HEK293 (cell line): ENCODE measurements at regions of chr12 and their contacts with region 1.

Region 1: DNA sequence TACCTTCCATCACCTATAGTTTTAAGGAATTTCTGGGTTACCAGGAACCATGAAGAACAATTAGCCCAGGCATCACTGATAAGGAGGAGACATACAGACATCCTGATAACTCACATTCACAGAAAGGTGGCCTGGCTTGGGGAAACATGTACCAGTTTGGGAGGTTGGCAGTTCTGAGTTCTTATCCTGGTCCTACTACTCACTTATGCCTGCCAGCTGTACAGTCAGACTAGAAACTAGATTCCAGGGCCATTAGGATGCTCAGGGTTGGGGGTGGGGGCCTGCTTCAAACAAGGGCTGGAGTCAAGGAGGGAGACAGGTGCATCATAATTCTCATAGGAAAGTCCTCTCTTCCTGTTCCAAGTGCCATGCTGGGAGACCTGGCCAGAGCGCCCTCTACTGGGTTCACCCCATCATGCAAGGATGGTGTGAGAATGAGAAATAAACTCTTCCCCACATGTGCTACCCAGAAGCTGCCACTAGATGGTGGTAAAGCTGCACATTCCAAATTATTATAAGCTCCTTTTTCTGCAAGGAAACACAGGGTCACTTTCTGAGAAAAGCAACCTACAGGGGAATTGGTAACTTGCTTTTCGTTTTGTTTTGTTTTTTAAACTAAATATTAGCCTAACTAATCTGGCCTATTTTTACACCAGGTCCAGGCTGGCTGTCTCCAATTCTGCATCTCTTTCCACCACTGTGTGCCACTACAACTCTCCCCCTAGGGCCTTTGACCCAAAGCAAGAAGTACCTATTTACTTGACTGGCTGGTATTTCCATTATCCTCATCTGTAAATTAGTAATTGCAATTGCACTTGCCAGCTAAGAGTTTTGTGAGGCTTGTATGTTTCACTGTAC is 14.5 kb downstream of the OAS2 start:
- H3K4me3 ChIP-seq: no peak overlapping the region
- H3K27ac ChIP-seq: no peak overlapping the region
- H3K4me1 ChIP-seq: no peaks in the 10 kb centered on the region
- CTCF ChIP-seq: peak; percentile 65

Region 2: DNA sequence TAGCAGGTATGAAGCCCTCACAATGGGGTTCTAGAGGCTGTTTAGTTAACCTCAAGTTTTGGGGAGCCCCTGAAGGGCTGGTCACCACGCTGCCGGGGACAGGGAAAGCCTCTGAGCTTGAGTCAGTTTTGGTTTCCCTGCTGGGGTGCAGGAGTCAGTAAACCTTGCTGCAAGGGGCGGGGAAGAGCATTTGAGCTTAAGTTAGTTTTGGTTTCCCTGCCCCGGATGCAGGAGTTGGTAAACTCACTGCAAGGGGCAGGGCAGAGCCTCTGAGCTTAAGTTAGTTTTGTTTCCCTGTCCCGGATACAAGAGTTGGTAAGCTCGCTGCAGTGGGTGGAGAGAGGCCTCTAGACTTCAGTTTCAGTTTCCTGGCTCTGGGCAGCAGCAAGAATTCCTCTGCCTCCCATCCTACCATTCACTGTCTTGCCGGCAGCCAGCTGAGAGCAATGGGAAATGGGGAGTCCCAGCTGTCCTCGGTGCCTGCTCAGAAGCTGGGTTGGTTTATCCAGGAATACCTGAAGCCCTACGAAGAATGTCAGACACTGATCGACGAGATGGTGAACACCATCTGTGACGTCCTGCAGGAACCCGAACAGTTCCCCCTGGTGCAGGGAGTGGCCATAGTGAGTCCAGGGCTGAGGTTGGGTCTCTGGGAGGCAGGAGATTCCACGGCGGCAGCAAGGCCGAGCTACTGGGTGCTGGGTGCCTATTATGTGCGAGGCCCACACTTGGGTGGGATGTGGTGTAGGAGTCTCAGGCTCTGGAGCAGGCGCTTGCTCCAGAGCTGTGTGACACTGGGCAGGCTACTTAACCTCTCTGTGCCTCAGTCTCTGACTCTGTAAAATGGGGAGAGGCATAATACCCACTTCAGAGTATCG is 14.4 kb before region 1 on chr12 and contains the start of gene OAS2:
- CTCF ChIA-PET with region 1: interaction called, 23 read pairs
- POLR2A ChIA-PET with region 1: no interaction called
- H3K4me3 ChIP-seq: no peak within 1 kb of the TSS
- H3K27ac ChIP-seq: no peak within 1 kb of the TSS
- H3K4me1 ChIP-seq: no peaks in the 10 kb centered on the region
- CTCF ChIP-seq: no peak

Region 3: GRCh38 chr12:113019041-113019440 is 26.3 kb after region 1 on chr12:
- CTCF ChIA-PET with region 1: interaction called, 20 read pairs
- POLR2A ChIA-PET with region 1: no interaction called
- H3K4me3 ChIP-seq: no peak overlapping the region
- H3K27ac ChIP-seq: no peak overlapping the region
- H3K4me1 ChIP-seq: no peaks in the 10 kb centered on the region
- CTCF ChIP-seq: no peak

Region 4: GRCh38 chr12:113098446-113098896 is 105.7 kb after region 1 on chr12:
- CTCF ChIA-PET with region 1: interaction called, 11 read pairs
- POLR2A ChIA-PET with region 1: no interaction called
- H3K4me3 ChIP-seq: no peak overlapping the region
- H3K27ac ChIP-seq: no peak overlapping the region
- H3K4me1 ChIP-seq: no peaks in the 10 kb centered on the region
- CTCF ChIP-seq: peak; percentile 79

Region 5: GRCh38 chr12:113174461-113175384 is 182.0 kb after region 1 on chr12:
- CTCF ChIA-PET with region 1: interaction called, 11 read pairs
- POLR2A ChIA-PET with region 1: no interaction called
- H3K4me3 ChIP-seq: no peak overlapping the region
- H3K27ac ChIP-seq: no peak overlapping the region
- H3K4me1 ChIP-seq: no peaks in the 10 kb centered on the region
- CTCF ChIP-seq: peak; percentile 83